ENCODE measurements at regions of chr5 and their contacts with region 1.

Region 1: GRCh38 chr5:146426853-146427618 is 20.1 kb upstream of the TCERG1 start:
- DNase-seq: peak; percentile 59
- H3K4me3 ChIP-seq: no peak overlapping the region
- H3K27ac ChIP-seq: no peak overlapping the region
- H3K4me1 ChIP-seq: no peaks in the 10 kb centered on the region
- CTCF ChIP-seq: peak; percentile 91

Region 2: DNA sequence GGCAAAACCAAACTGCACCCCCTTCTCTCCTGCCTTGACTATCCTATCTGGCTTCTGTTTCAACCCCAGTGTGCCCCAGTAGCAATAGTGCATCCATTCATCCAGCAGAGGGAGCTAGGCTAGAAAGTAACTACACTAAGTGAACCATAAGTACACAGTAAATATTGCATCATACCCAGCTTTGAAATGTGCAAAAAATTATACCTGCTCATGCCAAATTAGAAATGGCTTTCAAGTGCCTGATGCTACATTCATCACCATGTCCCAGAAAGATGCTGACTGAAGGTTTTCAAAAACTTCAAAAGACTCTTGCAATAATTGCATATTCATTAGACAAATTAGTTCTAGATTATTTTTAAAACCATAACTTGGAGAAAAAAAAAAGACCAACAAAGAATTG is 745.4 kb before region 1 on chr5:
- CTCF ChIA-PET with region 1: no interaction called
- POLR2A ChIA-PET with region 1: no interaction called
- intact Hi-C with region 1: loop called (anchors 2 kb)
- DNase-seq: peak; percentile 78
- H3K4me3 ChIP-seq: no peak overlapping the region
- H3K27ac ChIP-seq: no peak overlapping the region
- H3K4me1 ChIP-seq: no peaks in the 10 kb centered on the region
- CTCF ChIP-seq: peak; percentile 89

Region 3: GRCh38 chr5:146137967-146138403 is 289.1 kb before region 1 on chr5:
- CTCF ChIA-PET with region 1: no interaction called
- POLR2A ChIA-PET with region 1: no interaction called
- intact Hi-C with region 1: loop called (anchors 5 kb)
- DNase-seq: no peak
- H3K4me3 ChIP-seq: no peak overlapping the region
- H3K27ac ChIP-seq: no peak overlapping the region
- H3K4me1 ChIP-seq: no peaks in the 10 kb centered on the region
- CTCF ChIP-seq: no peak

Region 4: DNA sequence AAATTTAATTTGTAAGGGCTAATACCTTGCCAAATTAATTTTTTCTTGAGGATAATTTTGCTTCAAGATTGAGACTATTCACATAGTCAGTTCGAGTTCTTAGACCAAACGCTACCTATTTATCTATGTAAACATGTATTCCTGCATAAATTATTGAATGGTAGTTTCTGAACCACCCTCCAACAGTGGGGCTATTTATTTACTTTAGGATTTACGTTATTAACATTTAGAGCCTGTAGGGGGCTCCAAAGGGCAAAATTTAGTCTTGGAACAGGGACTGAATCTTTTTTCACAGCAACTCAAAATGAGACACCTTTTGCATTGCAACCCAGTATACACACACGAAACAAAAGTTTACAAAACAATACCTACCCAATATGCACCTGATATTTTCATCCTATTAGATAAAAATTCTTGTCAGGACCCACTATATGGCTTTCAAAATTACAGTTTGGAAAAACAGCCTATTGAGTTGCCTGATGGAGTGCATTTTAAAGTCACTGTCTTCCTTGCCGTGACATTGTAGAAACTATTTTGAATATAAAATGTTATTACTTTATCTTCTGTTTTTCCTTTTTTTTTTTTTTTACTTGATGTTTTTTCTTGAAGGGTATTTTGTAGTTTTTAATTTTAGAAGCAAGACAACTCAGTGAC is 135.5 kb before region 1 on chr5:
- CTCF ChIA-PET with region 1: no interaction called
- POLR2A ChIA-PET with region 1: no interaction called
- intact Hi-C with region 1: loop called (anchors 2 kb)
- DNase-seq: peak; percentile 63
- H3K4me3 ChIP-seq: no peak overlapping the region
- H3K27ac ChIP-seq: no peak overlapping the region
- H3K4me1 ChIP-seq: no peaks in the 10 kb centered on the region
- CTCF ChIP-seq: peak; percentile 91

Region 5: DNA sequence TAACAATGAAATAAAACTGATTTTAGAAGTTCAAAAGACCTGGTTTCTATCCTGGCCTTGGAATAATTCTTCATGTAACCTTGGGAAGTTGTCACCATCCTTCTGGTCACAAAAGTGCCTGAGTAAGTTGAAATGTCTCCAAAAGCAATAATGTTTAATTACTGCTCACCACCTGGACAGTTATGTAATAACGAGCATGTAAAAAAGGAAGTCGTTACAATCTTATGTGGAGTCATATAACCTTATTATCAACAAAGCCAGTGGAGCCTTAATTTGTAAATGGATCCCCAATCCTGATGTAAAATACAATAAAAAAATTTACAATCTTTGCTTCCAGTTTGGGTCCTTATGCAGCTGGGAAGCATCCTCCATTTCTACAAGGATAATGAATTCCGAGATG is 153.2 kb after region 1 on chr5:
- CTCF ChIA-PET with region 1: no interaction called
- POLR2A ChIA-PET with region 1: no interaction called
- intact Hi-C with region 1: no loop called
- DNase-seq: no peak
- H3K4me3 ChIP-seq: no peak overlapping the region
- H3K27ac ChIP-seq: no peak overlapping the region
- H3K4me1 ChIP-seq: no peaks in the 10 kb centered on the region
- CTCF ChIP-seq: no peak

Region 6: DNA sequence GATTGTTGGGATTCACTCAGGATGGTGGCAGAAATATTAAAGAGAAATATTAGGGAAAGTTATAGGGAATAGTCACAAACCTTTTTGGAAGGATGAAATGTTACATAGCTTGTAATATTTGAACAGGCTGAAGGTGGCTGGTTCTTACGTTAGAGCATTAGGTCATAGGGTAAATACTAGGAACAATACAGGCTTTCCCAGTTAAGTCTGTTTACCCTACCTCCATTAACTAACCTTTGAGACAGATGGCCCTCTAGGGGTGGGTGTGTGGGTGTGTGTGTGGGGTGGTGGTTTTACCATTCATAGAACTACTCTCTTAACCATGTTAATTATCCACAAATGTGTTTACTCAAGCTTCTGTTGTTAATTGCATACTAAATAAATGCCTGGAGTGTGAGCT is 713.5 kb after region 1 on chr5:
- CTCF ChIA-PET with region 1: no interaction called
- POLR2A ChIA-PET with region 1: no interaction called
- intact Hi-C with region 1: no loop called
- DNase-seq: no peak
- H3K4me3 ChIP-seq: no peak overlapping the region
- H3K27ac ChIP-seq: no peak overlapping the region
- H3K4me1 ChIP-seq: no peaks in the 10 kb centered on the region
- CTCF ChIP-seq: no peak